Heart right ventricle (tissue), 16 donors: ENCODE measurements at regions of chr3 and their contacts with region 1.

Region 1: DNA sequence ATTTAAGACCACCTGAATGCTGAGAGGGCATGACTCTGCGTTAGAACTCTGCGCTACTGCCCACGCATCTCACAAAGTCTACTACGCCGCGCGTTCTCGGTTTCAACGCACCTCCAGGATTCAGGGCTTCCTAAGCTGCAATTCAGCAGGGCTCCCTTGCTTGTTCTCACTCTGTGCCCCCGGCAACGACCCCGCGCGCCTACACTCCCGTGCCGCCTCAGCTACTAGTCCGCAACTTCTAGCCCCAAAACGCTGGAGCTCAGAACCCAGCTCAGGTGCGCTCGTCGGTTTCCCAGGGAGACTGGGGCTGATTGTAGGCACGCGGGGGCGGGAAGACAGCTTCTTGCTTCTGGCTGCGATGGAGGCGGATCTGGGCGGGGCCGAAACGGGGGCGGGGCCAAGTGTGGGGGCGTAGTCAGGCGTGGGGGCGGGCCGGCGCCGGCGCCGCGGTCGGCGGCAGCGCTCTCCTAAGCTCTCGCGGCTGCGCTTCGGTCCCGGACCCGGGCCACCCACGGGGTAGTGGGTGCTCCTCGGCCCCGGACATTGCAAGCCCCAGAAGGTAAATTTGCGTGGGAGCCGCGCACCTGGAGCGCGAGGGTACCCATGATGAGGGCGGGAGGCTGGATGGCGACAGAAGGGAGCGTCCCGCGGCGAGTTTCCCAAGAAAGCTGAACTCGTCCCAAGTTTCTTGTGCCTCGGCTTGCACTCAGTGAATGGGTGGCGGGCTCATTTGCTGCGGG is at the start of gene ARHGEF26:
- DNase-seq: peak; percentile 86 to 87
- ATAC-seq: peak; percentile 92 to 98 (median 95)
- H3K4me3 ChIP-seq: peak within 1 kb of the TSS; percentile 59 to 96 (median 78)
- H3K27ac ChIP-seq: peak within 1 kb of the TSS; percentile 20 to 76 (median 47)
- H3K4me1 ChIP-seq: peaks cover 0 to 28% (median 17%) of the 10 kb centered on the region in 9 donors
- H3K27me3 ChIP-seq: peaks cover 0 to 57% (median 13%) of the 10 kb centered on the region in 7 donors
- CTCF ChIP-seq: no peak
- total RNA-seq, gene ARHGEF26: 0.74 to 2.2 (median 1.1) TPM

Region 2: GRCh38 chr3:154018100-154018696 is 102.9 kb before region 1 on chr3:
- intact Hi-C with region 1: no loop called
- DNase-seq: no peak
- ATAC-seq: no peak
- H3K4me3 ChIP-seq: no peak overlapping the region
- H3K27ac ChIP-seq: no peak overlapping the region
- H3K4me1 ChIP-seq: no peaks in the 10 kb centered on the region
- H3K27me3 ChIP-seq: no peaks in the 10 kb centered on the region
- CTCF ChIP-seq: peak in 6 of 9 donors; percentile 6 to 53 (median 28)

Region 3: GRCh38 chr3:154235330-154235729 is 114.2 kb after region 1 on chr3:
- intact Hi-C with region 1: loop called in 1 of 10 experiments (anchors 2 kb)
- DNase-seq: no peak
- ATAC-seq: no peak
- H3K4me3 ChIP-seq: no peak overlapping the region
- H3K27ac ChIP-seq: no peak overlapping the region
- H3K4me1 ChIP-seq: peaks cover 0 to 16% (median 0%) of the 10 kb centered on the region in 9 donors
- H3K27me3 ChIP-seq: no peaks in the 10 kb centered on the region
- CTCF ChIP-seq: no peak